Colonic mucosa (tissue), 4 donors: ENCODE measurements at regions of chr2 and their contacts with region 1.

Region 1: GRCh38 chr2:175366815-175367214 is 185.3 kb upstream of the ATP5MC3 start:
- DNase-seq: peak; percentile 22
- H3K4me3 ChIP-seq: no peak overlapping the region
- H3K27ac ChIP-seq: no peak overlapping the region
- H3K4me1 ChIP-seq: no peaks in the 10 kb centered on the region
- H3K27me3 ChIP-seq: no peaks in the 10 kb centered on the region
- CTCF ChIP-seq: peak; percentile 63

Region 2: GRCh38 chr2:175535631-175536030 is 168.8 kb after region 1 on chr2:
- intact Hi-C with region 1: no loop called
- DNase-seq: no peak
- H3K4me3 ChIP-seq: no peak overlapping the region
- H3K27ac ChIP-seq: no peak overlapping the region
- H3K4me1 ChIP-seq: no peaks in the 10 kb centered on the region
- H3K27me3 ChIP-seq: no peaks in the 10 kb centered on the region
- CTCF ChIP-seq: no peak

Region 3: DNA sequence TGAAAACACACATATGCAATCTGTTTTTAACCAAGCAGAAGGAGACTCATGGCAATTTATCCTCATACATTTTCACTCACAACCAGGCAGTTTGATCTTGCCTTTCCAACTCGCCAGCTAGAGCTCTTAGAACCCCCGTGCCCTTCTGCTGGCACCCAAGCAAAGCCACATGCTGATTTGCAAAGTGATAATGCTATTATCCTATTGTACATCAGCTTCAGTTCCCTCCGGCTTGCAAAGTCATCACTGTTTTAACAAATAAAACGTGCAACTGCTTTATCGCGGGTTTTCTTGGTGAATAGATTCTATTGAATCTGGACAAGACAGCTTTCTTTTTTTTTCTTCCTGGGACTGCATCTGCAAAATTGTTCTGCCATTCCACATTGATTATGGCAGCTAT is 320.6 kb after region 1 on chr2:
- intact Hi-C with region 1: loop called (anchors 5 kb)
- DNase-seq: no peak
- H3K4me3 ChIP-seq: no peak overlapping the region
- H3K27ac ChIP-seq: no peak overlapping the region
- H3K4me1 ChIP-seq: no peaks in the 10 kb centered on the region
- H3K27me3 ChIP-seq: no peaks in the 10 kb centered on the region
- CTCF ChIP-seq: no peak